Naive thymus-derived CD4-positive, alpha-beta T cell (primary cell): ENCODE measurements at regions of chr5 and their contacts with region 1.

Region 1: DNA sequence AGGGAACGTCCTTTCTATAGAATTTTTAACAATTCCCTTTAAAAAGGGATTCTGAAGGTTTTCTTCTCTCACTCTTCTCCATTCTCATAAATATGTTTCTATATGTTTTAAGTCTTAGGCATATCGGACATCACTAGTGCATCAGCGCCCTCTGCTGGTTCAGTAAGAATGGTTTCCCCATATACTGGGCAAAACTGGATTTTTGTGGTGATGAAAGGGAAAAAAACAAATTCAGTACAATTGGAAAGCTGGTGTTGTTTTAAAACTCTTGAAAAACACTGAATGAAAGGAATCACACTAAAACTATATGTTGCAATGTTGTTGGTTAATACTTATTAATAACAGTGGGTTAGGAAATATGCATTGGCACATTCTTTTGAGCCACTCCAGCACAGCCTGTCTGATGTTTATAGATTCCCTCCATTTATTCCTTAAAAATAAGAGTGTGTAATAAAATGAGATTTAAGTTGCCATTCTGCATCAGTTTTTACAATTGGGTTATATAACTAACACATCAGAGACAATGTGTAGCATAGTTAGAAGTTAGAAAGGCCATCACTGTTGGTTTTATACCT is 15.8 kb downstream of the CWC27 start:
- DNase-seq: peak; percentile 36 to 74 (median 65)
- ATAC-seq: peak; percentile 90
- H3K4me3 ChIP-seq: no peak overlapping the region
- H3K4me3 Mint-ChIP-seq: no peak overlapping the region
- H3K27ac ChIP-seq: no peak overlapping the region
- H3K27ac Mint-ChIP-seq: peak overlapping the region in 1 of 9 donors; percentile 37
- H3K4me1 ChIP-seq: no peaks in the 10 kb centered on the region
- H3K4me1 Mint-ChIP-seq: peaks cover 0 to 16% (median 11%) of the 10 kb centered on the region in 7 donors
- H3K27me3 ChIP-seq: no peaks in the 10 kb centered on the region
- H3K27me3 Mint-ChIP-seq: no peaks in the 10 kb centered on the region

Region 2: DNA sequence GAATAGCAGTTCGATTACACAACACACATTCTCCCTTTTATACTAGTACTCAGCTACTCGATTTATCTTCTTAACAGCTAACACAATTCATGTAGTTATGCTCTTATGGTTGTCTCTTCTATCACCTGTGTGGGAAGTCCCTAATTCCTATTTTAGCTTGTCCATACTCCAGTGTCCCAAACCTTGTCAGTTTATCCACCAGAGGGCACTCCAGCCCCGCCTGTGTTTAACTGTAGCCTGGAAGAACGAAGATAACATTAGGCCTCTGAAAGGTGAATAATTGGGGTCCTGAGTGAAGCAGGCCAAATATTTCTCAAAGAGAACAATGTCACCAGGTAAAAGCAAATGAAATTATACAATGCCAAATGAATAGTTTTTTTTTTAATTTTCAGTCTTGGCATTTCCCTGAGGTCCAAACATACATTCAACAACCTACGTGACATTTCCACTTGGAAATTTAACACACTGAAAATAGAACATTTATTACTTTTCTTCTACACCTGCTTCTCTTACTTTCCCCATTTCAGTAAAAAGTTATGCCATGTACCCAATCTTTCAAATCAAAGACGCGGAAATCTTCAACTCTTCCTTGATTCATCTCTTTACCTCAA is 1383.0 kb before region 1 on chr5:
- CTCF ChIA-PET with region 1: no interaction called
- POLR2A ChIA-PET with region 1: no interaction called
- intact Hi-C with region 1: loop called in 1 of 2 experiments (anchors 10 kb)
- DNase-seq: peak in 1 of 9 donors; percentile 21
- ATAC-seq: no peak
- H3K4me3 ChIP-seq: no peak overlapping the region
- H3K4me3 Mint-ChIP-seq: no peak overlapping the region
- H3K27ac ChIP-seq: no peak overlapping the region
- H3K27ac Mint-ChIP-seq: no peak overlapping the region
- H3K4me1 ChIP-seq: no peaks in the 10 kb centered on the region
- H3K4me1 Mint-ChIP-seq: no peaks in the 10 kb centered on the region
- H3K27me3 ChIP-seq: no peaks in the 10 kb centered on the region
- H3K27me3 Mint-ChIP-seq: no peaks in the 10 kb centered on the region

Region 3: GRCh38 chr5:64754066-64754465 is 30.5 kb before region 1 on chr5:
- CTCF ChIA-PET with region 1: no interaction called
- POLR2A ChIA-PET with region 1: no interaction called
- intact Hi-C with region 1: no loop called
- DNase-seq: no peak
- ATAC-seq: no peak
- H3K4me3 ChIP-seq: no peak overlapping the region
- H3K4me3 Mint-ChIP-seq: no peak overlapping the region
- H3K27ac ChIP-seq: no peak overlapping the region
- H3K27ac Mint-ChIP-seq: no peak overlapping the region
- H3K4me1 ChIP-seq: no peaks in the 10 kb centered on the region
- H3K4me1 Mint-ChIP-seq: peaks cover 5 to 16% (median 13%) of the 10 kb centered on the region in 7 donors
- H3K27me3 ChIP-seq: no peaks in the 10 kb centered on the region
- H3K27me3 Mint-ChIP-seq: no peaks in the 10 kb centered on the region

Region 4: GRCh38 chr5:64768358-64769312 is 15.9 kb before region 1 on chr5 and contains the starts of genes CWC27 and SREK1IP1:
- CTCF ChIA-PET with region 1: interaction called, 3 read pairs
- POLR2A ChIA-PET with region 1: interaction called, 3 read pairs
- intact Hi-C with region 1: loop called in 1 of 2 experiments (anchors 1 kb)
- DNase-seq: peak; percentile 65 to 88 (median 83)
- ATAC-seq: peak; percentile 98
- H3K4me3 ChIP-seq: peak within 1 kb of the TSS; percentile 90
- H3K4me3 Mint-ChIP-seq: peak within 1 kb of the TSS; percentile 94 to 100 (median 99)
- H3K27ac ChIP-seq: peak within 1 kb of the TSS; percentile 88
- H3K27ac Mint-ChIP-seq: peak within 1 kb of the TSS; percentile 96 to 100 (median 98)
- H3K4me1 ChIP-seq: peaks cover 21 to 37% of the 10 kb centered on the region in 2 donors
- H3K4me1 Mint-ChIP-seq: peaks cover 34 to 80% (median 77%) of the 10 kb centered on the region in 7 donors
- H3K27me3 ChIP-seq: no peaks in the 10 kb centered on the region
- H3K27me3 Mint-ChIP-seq: no peaks in the 10 kb centered on the region
- total RNA-seq, gene CWC27: 17.8 to 27.4 (median 21.0) TPM
- total RNA-seq, gene SREK1IP1: 11.7 to 29.9 (median 21.7) TPM